ENCODE measurements at regions of chr12 and their contacts with region 1.

Region 1: GRCh38 chr12:133080368-133081158 is at the start of gene ZNF140:
- DNase-seq: peak; percentile 95
- H3K4me3 Mint-ChIP-seq: no peak within 1 kb of the TSS
- H3K27ac Mint-ChIP-seq: no peak within 1 kb of the TSS
- H3K4me1 Mint-ChIP-seq: peaks cover 13% of the 10 kb centered on the region
- H3K27me3 Mint-ChIP-seq: no peaks in the 10 kb centered on the region
- total RNA-seq, gene ZNF140: 13.3 to 13.9 TPM

Region 2: DNA sequence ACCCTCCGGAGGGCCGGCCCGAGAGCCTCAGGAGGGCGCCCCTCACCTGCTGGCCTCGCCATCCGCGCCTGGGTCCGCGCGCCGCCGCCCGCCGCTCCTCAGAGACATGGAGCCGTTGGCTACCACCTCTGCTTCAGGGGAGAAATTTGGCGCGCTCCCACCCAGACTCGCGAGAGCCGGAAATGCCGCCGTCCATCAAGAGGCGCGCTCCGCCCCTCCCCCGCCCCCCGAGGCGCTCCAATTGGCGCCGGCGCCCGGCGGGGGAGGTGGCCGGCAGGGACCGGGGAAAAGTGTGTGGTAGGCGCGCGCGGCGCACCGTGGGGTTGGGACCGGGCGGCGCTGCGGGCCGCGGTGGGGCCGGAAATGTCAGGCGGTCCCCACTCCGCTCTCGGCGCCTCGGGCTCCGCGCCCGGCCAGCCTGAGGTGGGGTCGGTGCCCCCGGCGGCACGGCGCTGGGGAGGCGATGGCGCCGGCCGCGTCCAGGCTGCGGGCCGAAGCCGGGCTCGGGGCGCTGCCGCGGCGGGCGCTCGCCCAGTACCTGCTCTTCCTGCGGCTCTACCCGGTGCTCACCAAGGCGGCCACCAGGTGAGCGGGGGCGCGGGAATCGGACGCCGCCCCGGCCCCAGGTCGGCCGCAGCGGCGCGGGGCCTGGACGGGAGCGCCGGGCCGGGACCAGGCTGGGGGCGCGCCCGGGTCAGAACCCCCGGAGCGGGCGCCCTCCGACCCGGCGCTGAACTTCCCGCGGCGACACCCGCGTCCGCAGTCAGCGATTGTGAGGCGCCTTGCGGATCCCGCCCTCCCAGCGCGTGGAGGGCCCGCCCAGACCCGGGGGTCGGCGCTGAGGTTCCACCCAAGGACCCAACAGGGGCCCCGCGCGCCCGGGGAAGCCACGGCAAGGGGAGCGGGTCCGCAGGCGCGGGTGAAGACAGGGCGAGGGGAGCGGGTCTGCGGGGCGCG is 393.1 kb before region 1 on chr12 and contains the starts of genes POLE and PXMP2:
- CTCF ChIA-PET with region 1: no interaction called
- intact Hi-C with region 1: loop called (anchors 1 kb)
- DNase-seq: peak; percentile 96
- H3K4me3 Mint-ChIP-seq: peak within 1 kb of the TSS; percentile 79
- H3K27ac Mint-ChIP-seq: peak within 1 kb of the TSS; percentile 66
- H3K4me1 Mint-ChIP-seq: peaks cover 23% of the 10 kb centered on the region
- H3K27me3 Mint-ChIP-seq: no peaks in the 10 kb centered on the region
- total RNA-seq, gene POLE: 118 to 121 TPM
- total RNA-seq, gene PXMP2: 11.3 to 12.8 TPM

Region 3: GRCh38 chr12:132887513-132888351 is 192.8 kb before region 1 on chr12 and contains the start of gene CHFR:
- CTCF ChIA-PET with region 1: no interaction called
- intact Hi-C with region 1: loop called (anchors 1 kb)
- DNase-seq: peak; percentile 97
- H3K4me3 Mint-ChIP-seq: peak within 1 kb of the TSS; percentile 98
- H3K27ac Mint-ChIP-seq: peak within 1 kb of the TSS; percentile 99
- H3K4me1 Mint-ChIP-seq: peaks cover 32% of the 10 kb centered on the region
- H3K27me3 Mint-ChIP-seq: no peaks in the 10 kb centered on the region
- total RNA-seq, gene CHFR: 27.2 to 32.8 TPM

Region 4: DNA sequence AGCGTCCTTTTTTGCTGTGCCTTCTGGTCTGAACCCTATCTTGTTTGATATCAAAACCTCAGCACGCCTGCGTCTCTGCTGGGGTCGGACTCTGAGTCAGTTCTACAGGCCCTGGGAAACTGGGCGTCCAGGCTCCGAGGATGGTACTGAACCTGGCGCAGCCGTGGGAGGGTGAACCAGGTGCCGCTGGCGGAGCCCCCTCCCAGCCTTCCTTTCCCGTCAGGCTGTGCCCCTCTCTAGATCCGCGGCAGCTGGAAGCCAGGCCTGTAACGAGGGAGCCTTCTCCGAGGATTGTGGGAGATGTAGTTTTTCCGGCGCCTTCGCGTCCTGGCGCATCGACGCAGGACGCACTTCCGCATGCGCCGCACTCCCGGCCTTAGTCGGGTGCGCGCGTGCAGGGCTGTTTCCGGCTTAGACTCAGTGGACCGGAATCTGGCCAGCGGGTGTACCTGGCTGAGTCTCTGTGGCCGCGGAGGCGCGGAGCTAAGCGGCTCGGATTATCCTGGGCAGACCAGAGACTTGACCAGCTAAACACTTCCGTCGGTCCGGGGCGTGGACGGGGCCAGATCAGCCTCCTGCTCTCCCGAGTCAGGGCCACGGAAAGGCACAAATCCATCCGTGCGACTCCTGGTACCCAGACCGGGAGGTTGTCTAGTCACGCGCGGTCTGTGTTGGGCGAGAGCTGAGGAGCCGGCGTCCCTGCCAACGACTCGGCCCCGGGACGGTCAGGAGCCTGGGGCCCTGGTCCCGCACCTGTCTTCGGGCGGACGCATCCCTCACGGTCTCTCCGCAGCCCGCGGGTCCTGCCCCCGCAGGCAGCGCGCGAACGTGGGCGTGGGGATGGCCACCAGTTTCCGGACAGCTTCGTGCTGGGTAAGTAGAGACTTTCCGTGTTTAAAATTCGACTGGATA is 94.3 kb before region 1 on chr12 and contains the start of gene ZNF26:
- CTCF ChIA-PET with region 1: no interaction called
- intact Hi-C with region 1: loop called (anchors 1 kb)
- DNase-seq: peak; percentile 92
- H3K4me3 Mint-ChIP-seq: peak within 1 kb of the TSS; percentile 91
- H3K27ac Mint-ChIP-seq: peak within 1 kb of the TSS; percentile 90
- H3K4me1 Mint-ChIP-seq: peaks cover 24% of the 10 kb centered on the region
- H3K27me3 Mint-ChIP-seq: peaks cover 4% of the 10 kb centered on the region
- total RNA-seq, gene ZNF26: 8.4 to 12.2 TPM

Region 5: GRCh38 chr12:133130038-133130807 is 49.7 kb after region 1 on chr12 and contains the starts of genes ZNF10 and ZNF891:
- CTCF ChIA-PET with region 1: interaction called, 3 read pairs
- intact Hi-C with region 1: loop called (anchors 1 kb)
- DNase-seq: peak; percentile 97
- H3K4me3 Mint-ChIP-seq: peak within 1 kb of the TSS; percentile 97
- H3K27ac Mint-ChIP-seq: peak within 1 kb of the TSS; percentile 97
- H3K4me1 Mint-ChIP-seq: peaks cover 14% of the 10 kb centered on the region
- H3K27me3 Mint-ChIP-seq: no peaks in the 10 kb centered on the region
- total RNA-seq, gene ZNF10: 4.9 to 6.0 TPM
- total RNA-seq, gene ZNF891: 1.1 to 1.2 TPM

Measured in activated naive CD4-positive, alpha-beta T cell treated with anti-CD3 and anti-CD28 coated beads for 36 hours (primary cell).